ENCODE measurements at regions of chr11 and their contacts with region 1.

Region 1: DNA sequence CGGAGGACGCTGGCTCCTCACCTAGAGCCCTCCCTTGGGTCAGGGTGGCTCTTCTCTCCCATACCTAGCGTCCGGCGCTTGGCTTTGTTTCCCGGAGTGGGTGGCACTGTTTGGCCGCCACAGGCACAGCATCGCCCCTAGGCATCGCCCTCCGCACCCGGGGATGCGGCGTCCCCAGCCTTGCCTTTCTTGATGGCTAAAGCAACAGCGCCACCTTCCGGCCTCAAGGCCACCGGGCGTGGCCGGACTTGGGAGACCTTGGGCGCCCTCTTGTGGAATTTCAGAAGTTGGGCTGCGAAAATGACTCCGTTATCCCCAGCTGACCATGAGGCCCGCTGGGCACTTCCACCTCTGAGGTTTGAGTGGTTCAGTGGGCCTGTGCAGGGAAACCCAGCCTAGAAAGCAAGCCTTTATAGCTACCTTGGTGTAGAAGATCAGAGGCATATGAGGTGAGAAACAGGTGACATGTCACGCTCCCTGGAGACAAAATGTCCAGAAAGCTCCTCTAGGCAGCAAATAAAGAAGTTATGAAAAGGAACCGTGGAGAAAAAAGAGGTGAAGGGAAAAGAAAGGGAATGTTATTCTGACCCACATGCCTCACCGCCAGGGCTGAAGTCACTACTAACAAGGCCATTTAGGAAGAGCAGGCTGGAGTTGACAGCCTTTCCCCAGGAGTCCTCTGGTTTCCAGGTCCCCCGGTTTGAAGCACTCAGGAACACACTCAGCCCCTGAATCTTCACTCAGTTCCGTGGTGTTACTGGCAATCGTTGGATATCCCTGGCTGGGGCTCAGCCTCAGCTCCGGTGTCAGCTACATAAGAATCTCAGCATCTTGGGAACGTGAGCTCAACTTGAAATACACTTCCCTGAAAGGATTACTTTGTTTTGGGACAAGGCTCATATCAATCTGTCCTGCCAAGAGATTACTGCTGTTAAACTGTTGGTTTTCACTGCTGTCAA is 54.1 kb downstream of the SNX19 start:
- DNase-seq: peak; percentile 81 to 86 (median 83)
- H3K4me3 ChIP-seq: no peak overlapping the region
- H3K4me3 Mint-ChIP-seq: no peak overlapping the region
- H3K27ac ChIP-seq: no peak overlapping the region
- H3K27ac Mint-ChIP-seq: peak overlapping the region in 2 of 7 donors; percentile 39 to 68
- H3K4me1 ChIP-seq: peaks cover 9% of the 10 kb centered on the region
- H3K4me1 Mint-ChIP-seq: peaks cover 4 to 11% (median 6%) of the 10 kb centered on the region in 4 donors
- H3K27me3 ChIP-seq: no peaks in the 10 kb centered on the region
- H3K27me3 Mint-ChIP-seq: peaks cover 0 to under 1% of the 10 kb centered on the region in 2 donors

Region 2: GRCh38 chr11:130213143-130213978 is 648.8 kb before region 1 on chr11:
- CTCF ChIA-PET with region 1: interaction called, 27 read pairs
- POLR2A ChIA-PET with region 1: interaction called, 3 read pairs
- intact Hi-C with region 1: loop called (anchors 1 kb)
- DNase-seq: peak; percentile 47 to 69 (median 63)
- H3K4me3 ChIP-seq: no peak overlapping the region
- H3K4me3 Mint-ChIP-seq: no peak overlapping the region
- H3K27ac ChIP-seq: no peak overlapping the region
- H3K27ac Mint-ChIP-seq: no peak overlapping the region
- H3K4me1 ChIP-seq: peaks cover 7% of the 10 kb centered on the region
- H3K4me1 Mint-ChIP-seq: no peaks in the 10 kb centered on the region
- H3K27me3 ChIP-seq: no peaks in the 10 kb centered on the region
- H3K27me3 Mint-ChIP-seq: peaks cover 4 to 9% of the 10 kb centered on the region in 2 donors

Region 3: DNA sequence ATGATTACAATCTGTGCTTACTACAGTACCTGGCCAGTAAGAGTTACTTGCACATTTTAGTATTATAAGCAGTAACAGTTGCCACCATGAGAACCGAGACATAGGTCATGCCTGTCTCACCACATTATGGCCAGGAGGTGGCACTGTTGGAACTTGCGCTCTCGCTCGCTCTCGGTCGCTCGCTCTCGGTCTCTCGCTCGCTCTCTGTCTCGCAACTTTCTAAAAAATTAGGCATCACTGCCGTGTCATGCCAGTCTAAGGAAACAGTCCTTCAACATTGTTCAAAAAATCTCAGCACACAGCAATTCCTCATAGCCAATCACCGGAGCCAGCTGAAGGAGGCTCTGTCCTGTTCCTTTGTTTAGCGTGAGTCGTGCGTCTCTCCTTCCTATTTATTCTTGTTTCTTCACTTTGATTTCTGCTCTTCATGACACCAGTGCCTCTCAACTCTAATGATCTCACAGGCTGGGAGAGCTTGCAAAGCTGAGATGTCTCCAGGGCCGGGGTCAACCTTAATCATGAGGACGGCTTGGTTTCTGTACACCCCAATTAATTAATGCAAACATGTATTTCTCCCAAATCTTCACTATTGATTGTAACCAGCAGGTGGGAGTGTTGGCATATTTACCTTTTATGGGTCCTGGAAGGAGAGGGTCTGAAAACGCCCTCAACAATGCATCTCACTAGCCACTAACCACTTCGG is 427.5 kb before region 1 on chr11:
- CTCF ChIA-PET with region 1: interaction called, 182 read pairs
- POLR2A ChIA-PET with region 1: no interaction called
- intact Hi-C with region 1: loop called (anchors 1 kb)
- DNase-seq: peak; percentile 60 to 68 (median 63)
- H3K4me3 ChIP-seq: peak overlapping the region; percentile 67 to 85
- H3K4me3 Mint-ChIP-seq: no peak overlapping the region
- H3K27ac ChIP-seq: no peak overlapping the region
- H3K27ac Mint-ChIP-seq: no peak overlapping the region
- H3K4me1 ChIP-seq: peaks cover 10% of the 10 kb centered on the region
- H3K4me1 Mint-ChIP-seq: peaks cover 7 to 17% (median 15%) of the 10 kb centered on the region in 4 donors
- H3K27me3 ChIP-seq: peaks cover 5% of the 10 kb centered on the region
- H3K27me3 Mint-ChIP-seq: peaks cover 9% of the 10 kb centered on the region in 2 donors

Region 4: GRCh38 chr11:130882138-130882551 is 20.0 kb after region 1 on chr11:
- CTCF ChIA-PET with region 1: interaction called, 10 read pairs
- POLR2A ChIA-PET with region 1: no interaction called
- intact Hi-C with region 1: no loop called
- DNase-seq: no peak
- H3K4me3 ChIP-seq: no peak overlapping the region
- H3K4me3 Mint-ChIP-seq: no peak overlapping the region
- H3K27ac ChIP-seq: no peak overlapping the region
- H3K27ac Mint-ChIP-seq: peak overlapping the region in 1 of 7 donors; percentile 82
- H3K4me1 ChIP-seq: no peaks in the 10 kb centered on the region
- H3K4me1 Mint-ChIP-seq: peaks cover 0 to 3% (median 0%) of the 10 kb centered on the region in 4 donors
- H3K27me3 ChIP-seq: no peaks in the 10 kb centered on the region
- H3K27me3 Mint-ChIP-seq: no peaks in the 10 kb centered on the region

Region 5: GRCh38 chr11:130894322-130895025 is 32.3 kb after region 1 on chr11:
- CTCF ChIA-PET with region 1: interaction called, 11 read pairs
- POLR2A ChIA-PET with region 1: no interaction called
- intact Hi-C with region 1: no loop called
- DNase-seq: peak; percentile 43 to 60 (median 50)
- H3K4me3 ChIP-seq: no peak overlapping the region
- H3K4me3 Mint-ChIP-seq: no peak overlapping the region
- H3K27ac ChIP-seq: no peak overlapping the region
- H3K27ac Mint-ChIP-seq: peak overlapping the region in 2 of 7 donors; percentile 18 to 45
- H3K4me1 ChIP-seq: no peaks in the 10 kb centered on the region
- H3K4me1 Mint-ChIP-seq: peaks cover 8 to 11% (median 9%) of the 10 kb centered on the region in 4 donors
- H3K27me3 ChIP-seq: no peaks in the 10 kb centered on the region
- H3K27me3 Mint-ChIP-seq: no peaks in the 10 kb centered on the region

Region 6: DNA sequence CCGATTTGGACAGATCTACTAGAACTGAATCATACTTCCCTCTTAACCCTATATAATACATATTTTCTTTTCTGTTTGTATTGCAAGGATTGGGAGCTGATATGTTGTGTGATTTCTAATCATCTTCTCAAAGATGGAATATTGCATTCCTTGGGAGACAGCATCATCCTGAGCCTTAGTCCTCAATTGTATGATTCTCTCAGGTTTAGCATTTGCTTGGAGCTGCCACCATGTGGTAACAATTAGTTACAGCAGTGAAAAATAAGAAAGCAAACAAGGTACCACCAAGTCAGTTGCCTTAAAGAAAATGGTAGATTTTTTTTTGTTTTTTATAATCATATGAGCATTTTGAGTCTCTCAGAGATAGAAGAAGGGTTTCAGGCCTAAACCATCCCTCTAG is 42.2 kb after region 1 on chr11:
- CTCF ChIA-PET with region 1: interaction called, 10 read pairs
- POLR2A ChIA-PET with region 1: no interaction called
- intact Hi-C with region 1: no loop called
- DNase-seq: no peak
- H3K4me3 ChIP-seq: no peak overlapping the region
- H3K4me3 Mint-ChIP-seq: no peak overlapping the region
- H3K27ac ChIP-seq: no peak overlapping the region
- H3K27ac Mint-ChIP-seq: no peak overlapping the region
- H3K4me1 ChIP-seq: peaks cover 3% of the 10 kb centered on the region
- H3K4me1 Mint-ChIP-seq: peaks cover 13 to 31% (median 19%) of the 10 kb centered on the region in 4 donors
- H3K27me3 ChIP-seq: no peaks in the 10 kb centered on the region
- H3K27me3 Mint-ChIP-seq: no peaks in the 10 kb centered on the region

Region 7: DNA sequence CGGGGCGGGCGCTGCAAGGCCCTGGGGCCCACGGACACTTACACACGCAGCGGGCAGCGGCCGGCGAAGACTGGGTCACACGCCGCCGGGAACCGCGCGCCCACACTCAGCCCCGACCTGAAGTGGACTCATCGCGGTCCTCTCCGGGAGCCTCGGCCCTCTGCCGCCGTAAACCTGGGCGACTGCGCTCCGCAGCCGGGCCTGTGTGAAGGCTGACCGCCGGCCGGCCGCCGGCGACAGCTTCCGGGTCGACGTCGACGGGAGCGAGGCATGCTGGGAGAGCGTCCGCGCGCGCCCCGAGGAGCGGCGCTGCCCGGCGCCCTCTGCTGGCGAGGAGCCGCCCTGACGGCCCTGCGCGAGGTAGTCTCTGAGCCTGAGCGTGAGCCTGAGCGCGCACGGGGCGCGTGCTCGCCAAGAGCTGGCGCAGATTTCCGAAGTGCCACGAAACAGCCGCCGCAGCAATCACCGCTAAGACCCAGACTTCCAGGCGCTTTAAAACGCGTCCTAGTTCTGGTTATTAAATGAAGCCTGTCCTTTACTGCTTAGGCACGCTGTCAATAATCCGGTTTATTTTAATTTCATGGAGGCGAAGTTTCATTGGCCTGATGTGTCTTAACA is 54.2 kb after region 1 on chr11 and contains the start of gene SNX19:
- CTCF ChIA-PET with region 1: interaction called, 7 read pairs
- POLR2A ChIA-PET with region 1: no interaction called
- intact Hi-C with region 1: loop called (anchors 5 kb)
- DNase-seq: peak; percentile 88 to 91 (median 90)
- H3K4me3 ChIP-seq: peak within 1 kb of the TSS; percentile 66 to 74
- H3K4me3 Mint-ChIP-seq: peak within 1 kb of the TSS; percentile 88 to 92 (median 90)
- H3K27ac ChIP-seq: peak within 1 kb of the TSS; percentile 95
- H3K27ac Mint-ChIP-seq: peak within 1 kb of the TSS; percentile 92 to 95 (median 93)
- H3K4me1 ChIP-seq: peaks cover 41% of the 10 kb centered on the region
- H3K4me1 Mint-ChIP-seq: peaks cover 18 to 57% (median 33%) of the 10 kb centered on the region in 4 donors
- H3K27me3 ChIP-seq: no peaks in the 10 kb centered on the region
- H3K27me3 Mint-ChIP-seq: peaks cover 5% of the 10 kb centered on the region in 2 donors
- total RNA-seq, gene SNX19: 84.1 to 94.2 TPM

Measured in CD4-positive, alpha-beta memory T cell (primary cell).